CD4-positive, alpha-beta memory T cell (primary cell): ENCODE measurements at regions of chr11 and their contacts with region 1.

Region 1: DNA sequence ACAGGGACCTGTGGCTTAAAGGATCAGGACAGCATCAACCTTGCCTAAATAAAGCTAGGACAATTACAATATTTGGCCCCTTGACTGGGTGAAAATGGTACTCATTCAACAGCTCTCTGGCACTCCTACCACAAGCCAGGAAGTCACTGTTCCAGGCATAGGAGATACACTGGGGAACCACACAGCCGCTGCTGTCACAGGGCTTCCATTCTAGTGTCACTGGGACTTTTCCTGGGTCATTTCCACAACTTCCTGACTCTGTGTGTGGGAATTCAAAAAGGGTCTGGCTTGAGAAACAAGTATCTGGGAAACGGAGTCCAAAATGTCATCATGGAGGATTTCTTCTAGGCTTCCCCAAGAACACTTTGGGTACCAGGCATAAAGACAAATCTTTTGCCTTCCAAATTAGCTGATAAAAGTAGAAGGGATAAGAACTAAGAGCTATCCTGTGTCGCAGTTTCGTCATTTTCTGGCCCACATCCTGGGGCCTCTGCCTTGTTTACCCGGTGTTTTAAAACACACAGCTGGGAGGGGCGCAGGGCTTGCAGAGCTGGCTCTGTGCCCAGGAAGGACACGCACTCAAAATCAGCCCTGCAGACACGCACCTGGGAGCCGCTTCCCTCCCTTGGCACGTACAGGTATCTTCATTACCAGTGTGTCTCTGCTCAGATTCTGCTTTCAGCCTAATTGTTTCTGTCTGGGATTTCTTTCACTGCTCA is 38.0 kb downstream of the TMEM45B start:
- DNase-seq: peak; percentile 88 to 93 (median 90)
- H3K4me3 ChIP-seq: peak overlapping the region in 1 of 2 donors; percentile 28
- H3K4me3 Mint-ChIP-seq: peak overlapping the region; percentile 73 to 89 (median 82)
- H3K27ac ChIP-seq: peak overlapping the region; percentile 51
- H3K27ac Mint-ChIP-seq: peak overlapping the region; percentile 94 to 100 (median 99)
- H3K4me1 ChIP-seq: peaks cover 42% of the 10 kb centered on the region
- H3K4me1 Mint-ChIP-seq: peaks cover 38 to 62% (median 40%) of the 10 kb centered on the region in 4 donors
- H3K27me3 ChIP-seq: no peaks in the 10 kb centered on the region
- H3K27me3 Mint-ChIP-seq: no peaks in the 10 kb centered on the region

Region 2: DNA sequence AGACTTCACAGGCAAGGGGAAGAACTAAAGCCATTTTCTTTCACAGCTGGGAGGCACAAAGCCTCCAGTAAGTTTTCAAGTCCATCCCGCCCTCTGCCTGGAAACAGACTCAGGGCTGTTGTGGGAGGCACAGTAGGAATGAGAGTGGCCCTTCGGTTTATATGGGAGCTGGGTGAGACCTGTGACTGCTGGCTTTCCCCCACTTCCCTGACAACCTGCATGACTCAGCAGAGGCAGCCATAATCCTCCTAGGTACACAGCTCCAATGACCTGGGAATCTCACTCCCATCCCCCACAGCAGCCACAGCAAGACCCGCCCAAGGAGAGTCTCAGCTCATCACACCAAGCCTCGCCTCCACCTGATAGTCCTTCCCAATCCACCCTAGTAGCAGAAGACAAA is 50.1 kb before region 1 on chr11:
- CTCF ChIA-PET with region 1: interaction called, 4 read pairs
- POLR2A ChIA-PET with region 1: interaction called, 44 read pairs
- intact Hi-C with region 1: no loop called
- DNase-seq: no peak
- H3K4me3 ChIP-seq: no peak overlapping the region
- H3K4me3 Mint-ChIP-seq: peak overlapping the region; percentile 36 to 80 (median 62)
- H3K27ac ChIP-seq: no peak overlapping the region
- H3K27ac Mint-ChIP-seq: peak overlapping the region; percentile 48 to 97 (median 79)
- H3K4me1 ChIP-seq: peaks cover 25% of the 10 kb centered on the region
- H3K4me1 Mint-ChIP-seq: peaks cover 32 to 74% (median 51%) of the 10 kb centered on the region in 4 donors
- H3K27me3 ChIP-seq: no peaks in the 10 kb centered on the region
- H3K27me3 Mint-ChIP-seq: peaks cover 3% of the 10 kb centered on the region in 2 donors

Region 3: DNA sequence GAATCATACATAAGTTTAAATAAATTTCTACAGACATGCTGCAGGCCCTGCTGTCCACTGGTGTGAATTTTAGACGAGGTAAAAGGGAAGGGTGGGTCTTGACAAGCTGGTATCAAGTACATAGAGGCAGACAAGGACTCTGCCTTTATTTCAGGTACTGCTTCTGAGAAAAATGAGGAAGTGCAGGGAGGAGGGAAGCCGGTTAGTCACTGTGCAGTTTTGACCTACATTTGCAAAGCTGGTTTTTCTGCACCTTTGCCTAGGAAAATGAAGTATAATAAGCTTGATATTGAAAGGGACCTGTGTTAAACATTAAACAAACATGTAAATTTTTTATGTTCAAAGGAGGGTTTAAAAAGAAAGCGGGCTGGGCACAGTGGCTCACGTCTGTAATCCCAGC is 13.4 kb before region 1 on chr11:
- CTCF ChIA-PET with region 1: interaction called, 9 read pairs
- POLR2A ChIA-PET with region 1: interaction called, 51 read pairs
- intact Hi-C with region 1: loop called (anchors 1 kb)
- DNase-seq: no peak
- H3K4me3 ChIP-seq: no peak overlapping the region
- H3K4me3 Mint-ChIP-seq: peak overlapping the region in 6 of 8 donors; percentile 33 to 78 (median 60)
- H3K27ac ChIP-seq: no peak overlapping the region
- H3K27ac Mint-ChIP-seq: peak overlapping the region in 6 of 7 donors; percentile 11 to 89 (median 55)
- H3K4me1 ChIP-seq: peaks cover 45% of the 10 kb centered on the region
- H3K4me1 Mint-ChIP-seq: peaks cover 27 to 65% (median 38%) of the 10 kb centered on the region in 4 donors
- H3K27me3 ChIP-seq: no peaks in the 10 kb centered on the region
- H3K27me3 Mint-ChIP-seq: no peaks in the 10 kb centered on the region